ENCODE measurements at regions of chr3 and their contacts with region 1.

Region 1: DNA sequence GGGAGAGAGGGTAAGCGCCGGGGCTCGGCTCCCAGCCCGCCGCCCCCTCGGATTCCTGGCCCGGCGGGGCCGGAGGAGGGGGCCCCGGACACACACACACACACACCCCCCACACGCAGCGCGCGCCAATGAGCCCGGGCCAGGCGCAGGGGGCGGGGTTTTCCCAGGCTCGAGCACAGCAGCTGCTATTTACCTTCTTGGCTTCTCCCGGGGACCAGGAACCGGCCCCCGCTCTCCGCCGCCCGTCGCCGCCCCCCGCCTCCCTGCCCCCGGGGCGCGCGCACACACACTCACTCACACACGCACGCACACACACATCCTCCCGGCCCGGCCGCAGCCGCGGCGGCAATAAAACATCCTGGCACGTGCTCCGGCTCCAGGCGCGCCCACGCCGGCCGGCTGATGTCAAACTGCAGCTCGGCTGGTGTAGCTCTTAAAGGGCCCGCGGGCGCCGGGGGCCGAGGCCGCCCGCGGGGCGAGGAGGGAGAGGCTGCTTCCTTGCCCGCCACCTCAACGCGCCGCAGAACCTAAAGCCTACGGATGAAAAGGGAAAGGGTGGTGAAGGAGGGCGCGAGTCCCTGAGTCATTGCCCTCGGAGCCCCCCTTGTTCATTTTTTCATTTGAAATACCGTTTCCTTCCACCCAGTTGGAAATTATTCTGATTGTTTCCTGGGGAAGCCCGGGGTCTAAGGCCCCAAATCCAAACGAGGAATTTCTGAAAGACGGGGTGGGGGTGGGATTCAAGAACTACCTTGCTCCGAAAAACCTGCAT is 1.0 kb upstream of the HES1 start:
- DNase-seq: peak; percentile 89
- H3K4me3 Mint-ChIP-seq: peak overlapping the region; percentile 82
- H3K27ac Mint-ChIP-seq: peak overlapping the region; percentile 78
- H3K4me1 Mint-ChIP-seq: peaks cover 77% of the 10 kb centered on the region
- H3K27me3 Mint-ChIP-seq: peaks cover 73% of the 10 kb centered on the region

Region 2: DNA sequence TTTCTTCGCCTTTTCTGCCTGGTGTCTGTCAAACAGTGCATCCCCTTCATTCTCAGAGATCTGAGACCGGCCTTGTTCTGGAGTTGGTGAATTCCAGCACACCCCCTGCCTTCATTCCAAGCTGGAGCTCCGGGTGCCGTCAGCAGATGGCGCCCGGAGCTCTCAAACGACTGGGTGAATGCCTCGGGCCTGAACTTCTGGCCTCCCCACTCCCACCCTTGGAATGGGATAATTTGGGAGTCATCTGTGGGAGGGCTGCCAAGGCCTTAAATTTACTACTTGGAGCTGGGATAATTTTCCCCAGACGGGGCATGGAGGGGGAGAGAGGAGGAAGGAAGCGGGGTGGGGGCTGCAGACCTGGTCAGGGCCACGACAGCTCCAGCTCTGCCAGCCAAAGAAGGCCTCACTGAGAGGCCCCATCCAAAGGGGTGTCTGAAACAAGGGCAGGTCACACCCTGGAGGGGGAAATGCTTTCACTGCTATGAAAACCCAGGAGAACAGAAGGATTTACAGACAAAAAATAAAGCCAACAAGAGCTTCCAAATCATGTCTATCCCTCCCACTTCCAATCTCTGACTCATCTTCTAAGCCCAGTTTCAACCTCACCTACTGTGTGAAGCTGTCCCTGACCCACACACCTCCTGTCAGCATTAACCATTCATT is 354.0 kb before region 1 on chr3:
- CTCF ChIA-PET with region 1: interaction called, 10 read pairs
- POLR2A ChIA-PET with region 1: interaction called, 4 read pairs
- DNase-seq: peak; percentile 33
- H3K4me3 Mint-ChIP-seq: no peak overlapping the region
- H3K27ac Mint-ChIP-seq: no peak overlapping the region
- H3K4me1 Mint-ChIP-seq: peaks cover 19% of the 10 kb centered on the region
- H3K27me3 Mint-ChIP-seq: peaks cover 58% of the 10 kb centered on the region

Region 3: GRCh38 chr3:194150252-194150935 is 15.5 kb after region 1 on chr3:
- CTCF ChIA-PET with region 1: no interaction called
- POLR2A ChIA-PET with region 1: no interaction called
- DNase-seq: no peak
- H3K4me3 Mint-ChIP-seq: no peak overlapping the region
- H3K27ac Mint-ChIP-seq: no peak overlapping the region
- H3K4me1 Mint-ChIP-seq: peaks cover 2% of the 10 kb centered on the region
- H3K27me3 Mint-ChIP-seq: peaks cover 71% of the 10 kb centered on the region

Region 4: GRCh38 chr3:194176274-194176991 is 41.5 kb after region 1 on chr3:
- CTCF ChIA-PET with region 1: no interaction called
- POLR2A ChIA-PET with region 1: no interaction called
- DNase-seq: no peak
- H3K4me3 Mint-ChIP-seq: no peak overlapping the region
- H3K27ac Mint-ChIP-seq: no peak overlapping the region
- H3K4me1 Mint-ChIP-seq: peaks cover 18% of the 10 kb centered on the region
- H3K27me3 Mint-ChIP-seq: peaks cover 36% of the 10 kb centered on the region

Region 5: GRCh38 chr3:194306109-194306686 is 171.3 kb after region 1 on chr3:
- CTCF ChIA-PET with region 1: interaction called, 22 read pairs
- POLR2A ChIA-PET with region 1: interaction called, 85 read pairs
- DNase-seq: peak; percentile 87
- H3K4me3 Mint-ChIP-seq: peak overlapping the region; percentile 48
- H3K27ac Mint-ChIP-seq: peak overlapping the region; percentile 93
- H3K4me1 Mint-ChIP-seq: peaks cover 69% of the 10 kb centered on the region
- H3K27me3 Mint-ChIP-seq: no peaks in the 10 kb centered on the region

Measured in activated CD4-positive, alpha-beta memory T cell treated with anti-CD3 and anti-CD28 coated beads, Interleukin-2, amount 10 ng/mL, durations not matched to agents 7 days and 5 days (primary cell).